Cardiac septum (tissue), 1 donor: ENCODE measurements at regions of chr10 and their contacts with region 1.

Region 1: DNA sequence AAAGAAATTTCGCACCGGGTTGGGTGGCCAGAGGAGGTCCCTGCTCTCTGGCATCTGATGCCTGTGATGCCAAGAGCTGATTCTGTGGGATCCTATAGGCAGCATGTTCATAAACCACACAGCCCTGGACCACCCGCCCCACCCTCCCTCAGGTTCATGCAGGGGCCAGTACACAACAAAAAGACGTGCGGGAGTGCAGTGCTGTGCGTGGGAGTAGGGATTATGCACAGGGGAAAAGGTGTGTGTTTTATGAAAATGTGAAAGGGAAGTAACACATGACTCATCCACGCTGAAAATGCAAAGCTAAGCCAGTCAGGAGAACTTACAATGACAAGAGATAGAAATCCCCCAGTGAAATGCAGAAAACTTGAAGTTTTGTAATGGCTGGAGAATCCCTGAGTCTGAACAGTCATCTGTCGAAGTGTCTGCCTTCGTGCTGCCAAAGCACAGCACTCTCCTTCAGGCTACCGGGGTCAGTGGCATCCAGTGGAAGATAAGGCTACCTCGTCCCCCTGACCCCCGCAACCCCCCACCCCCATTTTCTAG is 1.1 kb downstream of the KIAA1217 start:
- DNase-seq: no peak

Region 2: GRCh38 chr10:24255881-24256311 is 45.9 kb after region 1 on chr10:
- intact Hi-C with region 1: loop called (anchors 5 kb)
- DNase-seq: no peak

Region 3: GRCh38 chr10:24344279-24344678 is 134.3 kb after region 1 on chr10:
- intact Hi-C with region 1: loop called (anchors 10 kb)
- DNase-seq: no peak

Region 4: GRCh38 chr10:24360282-24361127 is 150.5 kb after region 1 on chr10:
- intact Hi-C with region 1: loop called (anchors 5 kb)
- DNase-seq: no peak

Region 5: GRCh38 chr10:24589265-24589664 is 379.2 kb after region 1 on chr10:
- intact Hi-C with region 1: no loop called
- DNase-seq: no peak